ENCODE measurements at regions of chr5 and their contacts with region 1.

Region 1: GRCh38 chr5:14869668-14870164 is 1.9 kb downstream of the ANKH start:
- DNase-seq: no peak
- H3K4me3 ChIP-seq: peak overlapping the region in 1 of 2 donors; percentile 89
- H3K27ac ChIP-seq: no peak overlapping the region
- H3K4me1 ChIP-seq: no peaks in the 10 kb centered on the region
- H3K27me3 ChIP-seq: no peaks in the 10 kb centered on the region
- CTCF ChIP-seq: no peak
- POLR2A ChIP-seq: no peak

Region 2: DNA sequence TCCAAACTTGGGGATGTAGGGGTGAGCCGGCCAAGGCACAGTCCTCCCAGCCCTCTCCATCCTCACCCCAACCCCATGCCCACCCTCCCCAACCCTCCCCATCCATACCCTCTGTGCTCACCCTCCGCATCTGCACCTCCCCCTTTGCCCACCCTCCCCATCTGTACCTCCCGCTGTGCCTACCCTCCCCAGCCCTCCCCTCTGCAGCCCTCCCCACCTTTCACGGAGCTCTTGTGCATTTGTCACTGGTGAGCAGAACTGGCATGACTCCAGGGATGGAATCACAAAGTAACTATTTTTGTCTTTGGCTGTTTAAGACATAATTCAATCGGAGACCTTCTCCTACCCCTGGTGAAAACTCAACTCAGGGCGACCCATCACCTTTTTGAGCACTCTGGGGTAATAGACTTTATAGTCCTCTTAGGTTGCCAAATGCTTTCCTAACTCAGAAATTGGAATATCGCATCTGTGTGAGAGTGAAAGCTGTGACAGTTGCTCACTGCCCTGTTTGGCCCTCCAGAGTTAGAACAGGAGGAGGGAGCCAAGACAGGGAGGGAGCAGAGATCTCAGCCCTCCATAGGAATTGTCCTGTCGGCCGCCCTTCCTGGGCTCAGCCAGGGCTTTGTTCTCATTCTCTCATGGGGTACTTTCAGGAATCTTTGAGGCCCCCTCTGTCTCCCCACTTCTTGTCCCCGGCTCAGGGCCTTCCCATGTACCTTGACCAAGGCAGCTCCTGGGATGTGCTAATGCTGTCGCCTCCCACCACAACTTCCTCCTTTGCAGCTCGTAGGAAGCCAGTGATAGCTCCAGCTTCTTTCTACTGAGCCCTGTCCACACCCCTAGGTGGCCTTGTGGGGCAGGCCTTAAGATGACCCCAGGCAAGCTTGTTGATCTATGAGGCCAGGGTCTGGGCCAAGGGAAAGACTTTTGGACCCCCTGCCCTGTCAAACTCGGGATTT is 169.0 kb before region 1 on chr5:
- intact Hi-C with region 1: no loop called
- DNase-seq: no peak
- H3K4me3 ChIP-seq: no peak overlapping the region
- H3K27ac ChIP-seq: peak overlapping the region in 1 of 2 donors; percentile 36
- H3K4me1 ChIP-seq: peaks cover 0 to 3% of the 10 kb centered on the region in 2 donors
- H3K27me3 ChIP-seq: no peaks in the 10 kb centered on the region
- CTCF ChIP-seq: no peak
- POLR2A ChIP-seq: no peak

Region 3: DNA sequence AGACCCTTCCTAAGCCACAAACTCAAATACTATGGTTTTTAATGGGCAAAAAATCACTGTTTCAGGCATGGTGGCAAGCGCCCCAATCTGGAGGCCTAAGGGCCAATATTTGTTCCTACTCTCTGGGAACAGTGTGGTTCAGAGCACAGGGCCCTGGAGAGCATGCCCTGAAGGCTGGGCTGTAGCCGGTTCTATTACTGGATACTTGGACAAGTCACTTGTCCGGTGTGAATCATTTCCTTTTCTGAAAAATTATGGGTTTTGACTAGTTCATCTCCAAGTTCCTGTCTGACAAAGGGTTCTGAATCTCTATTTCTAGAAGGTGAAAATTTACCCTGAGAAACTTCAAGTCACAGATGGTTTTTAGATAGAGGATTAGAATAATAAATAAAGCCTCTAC is 130.2 kb before region 1 on chr5:
- intact Hi-C with region 1: loop called (anchors 10 kb)
- DNase-seq: no peak
- H3K4me3 ChIP-seq: no peak overlapping the region
- H3K27ac ChIP-seq: no peak overlapping the region
- H3K4me1 ChIP-seq: no peaks in the 10 kb centered on the region
- H3K27me3 ChIP-seq: no peaks in the 10 kb centered on the region
- CTCF ChIP-seq: no peak
- POLR2A ChIP-seq: no peak

Region 4: GRCh38 chr5:14958196-14958595 is 88.5 kb after region 1 on chr5:
- intact Hi-C with region 1: no loop called
- DNase-seq: no peak
- H3K4me3 ChIP-seq: no peak overlapping the region
- H3K27ac ChIP-seq: no peak overlapping the region
- H3K4me1 ChIP-seq: no peaks in the 10 kb centered on the region
- H3K27me3 ChIP-seq: no peaks in the 10 kb centered on the region
- CTCF ChIP-seq: no peak
- POLR2A ChIP-seq: no peak

Region 5: DNA sequence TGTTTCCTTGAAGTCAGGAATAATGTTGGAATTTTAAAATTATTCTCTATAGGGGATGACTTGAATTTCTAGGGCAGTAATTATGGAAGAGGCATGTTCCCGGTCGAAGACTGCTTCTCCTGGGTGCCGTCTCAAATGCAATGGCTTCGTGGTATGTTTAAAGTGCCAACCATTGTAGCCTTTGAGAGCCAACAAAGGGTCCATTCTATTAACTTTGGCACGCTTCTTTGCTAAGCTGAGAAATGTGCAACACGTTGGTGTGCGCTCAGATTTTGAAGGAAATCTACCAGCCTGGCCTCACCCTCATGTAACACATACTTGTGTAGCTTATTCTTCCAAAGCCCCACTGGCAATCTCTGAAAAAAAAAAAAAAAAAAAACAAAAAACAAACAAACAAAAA is 223.1 kb after region 1 on chr5:
- intact Hi-C with region 1: no loop called
- DNase-seq: no peak
- H3K4me3 ChIP-seq: no peak overlapping the region
- H3K27ac ChIP-seq: no peak overlapping the region
- H3K4me1 ChIP-seq: no peaks in the 10 kb centered on the region
- H3K27me3 ChIP-seq: no peaks in the 10 kb centered on the region
- CTCF ChIP-seq: no peak
- POLR2A ChIP-seq: no peak

Measured in uterus (tissue), 4 donors.